ENCODE measurements at regions of chr14 and their contacts with region 1.

Region 1: DNA sequence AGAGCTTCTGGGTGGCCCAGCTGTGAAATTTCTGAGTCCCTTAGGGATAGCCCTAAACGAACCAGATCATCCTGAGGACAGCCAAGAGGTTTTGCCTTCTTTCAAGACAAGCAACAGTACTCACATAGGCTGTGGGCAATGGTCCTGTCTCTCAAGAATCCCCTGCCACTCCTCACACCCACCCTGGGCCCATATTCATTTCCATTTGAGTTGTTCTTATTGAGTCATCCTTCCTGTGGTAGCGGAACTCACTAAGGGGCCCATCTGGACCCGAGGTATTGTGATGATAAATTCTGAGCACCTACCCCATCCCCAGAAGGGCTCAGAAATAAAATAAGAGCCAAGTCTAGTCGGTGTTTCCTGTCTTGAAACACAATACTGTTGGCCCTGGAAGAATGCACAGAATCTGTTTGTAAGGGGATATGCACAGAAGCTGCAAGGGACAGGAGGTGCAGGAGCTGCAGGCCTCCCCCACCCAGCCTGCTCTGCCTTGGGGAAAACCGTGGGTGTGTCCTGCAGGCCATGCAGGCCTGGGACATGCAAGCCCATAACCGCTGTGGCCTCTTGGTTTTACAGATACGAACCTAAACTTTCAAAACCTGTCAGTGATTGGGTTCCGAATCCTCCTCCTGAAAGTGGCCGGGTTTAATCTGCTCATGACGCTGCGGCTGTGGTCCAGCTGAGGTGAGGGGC is 38.9 kb downstream of the DAD1 start:
- DNase-seq: no peak
- H3K4me3 ChIP-seq: no peak overlapping the region
- H3K27ac ChIP-seq: peak overlapping the region; percentile 32 to 59 (median 48)
- H3K4me1 ChIP-seq: peaks cover 4 to 34% (median 15%) of the 10 kb centered on the region in 4 donors
- H3K27me3 ChIP-seq: no peaks in the 10 kb centered on the region
- CTCF ChIP-seq: no peak
- EP300 ChIP-seq: no peak
- POLR2A ChIP-seq: no peak

Region 2: GRCh38 chr14:22505697-22506377 is 44.3 kb before region 1 on chr14:
- in situ Hi-C with region 1: no loop called
- intact Hi-C with region 1: no loop called
- DNase-seq: no peak
- H3K4me3 ChIP-seq: no peak overlapping the region
- H3K27ac ChIP-seq: peak overlapping the region in 3 of 4 donors; percentile 35 to 55 (median 37)
- H3K4me1 ChIP-seq: peaks cover 0 to 14% (median 6%) of the 10 kb centered on the region in 4 donors
- H3K27me3 ChIP-seq: no peaks in the 10 kb centered on the region
- CTCF ChIP-seq: no peak
- EP300 ChIP-seq: no peak
- POLR2A ChIP-seq: peak; percentile 9

Region 3: DNA sequence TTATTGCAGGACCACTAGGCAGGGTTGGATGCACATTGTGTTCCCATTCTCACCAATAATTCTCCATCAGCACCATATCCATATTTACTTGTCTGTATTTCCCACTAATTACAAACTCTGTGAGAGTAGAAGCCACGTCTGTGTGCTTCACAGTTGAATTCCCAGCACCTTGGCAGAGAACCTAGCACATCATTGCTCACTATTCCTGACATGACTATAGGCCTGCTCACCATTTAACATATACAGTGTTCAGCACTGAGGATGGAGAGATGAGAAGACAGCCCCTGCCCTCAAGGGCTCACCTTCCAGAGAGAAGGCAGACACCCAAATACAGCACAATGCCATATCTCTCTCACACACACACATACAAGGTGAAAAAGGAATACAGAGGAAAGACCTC is 33.9 kb after region 1 on chr14:
- in situ Hi-C with region 1: no loop called
- intact Hi-C with region 1: loop called (anchors 2 kb)
- DNase-seq: no peak
- H3K4me3 ChIP-seq: no peak overlapping the region
- H3K27ac ChIP-seq: no peak overlapping the region
- H3K4me1 ChIP-seq: peaks cover 16 to 49% (median 31%) of the 10 kb centered on the region in 4 donors
- H3K27me3 ChIP-seq: no peaks in the 10 kb centered on the region
- CTCF ChIP-seq: no peak
- EP300 ChIP-seq: no peak
- POLR2A ChIP-seq: no peak